Motor neuron (in vitro differentiated cells): ENCODE measurements at regions of chr7 and their contacts with region 1.

Region 1: DNA sequence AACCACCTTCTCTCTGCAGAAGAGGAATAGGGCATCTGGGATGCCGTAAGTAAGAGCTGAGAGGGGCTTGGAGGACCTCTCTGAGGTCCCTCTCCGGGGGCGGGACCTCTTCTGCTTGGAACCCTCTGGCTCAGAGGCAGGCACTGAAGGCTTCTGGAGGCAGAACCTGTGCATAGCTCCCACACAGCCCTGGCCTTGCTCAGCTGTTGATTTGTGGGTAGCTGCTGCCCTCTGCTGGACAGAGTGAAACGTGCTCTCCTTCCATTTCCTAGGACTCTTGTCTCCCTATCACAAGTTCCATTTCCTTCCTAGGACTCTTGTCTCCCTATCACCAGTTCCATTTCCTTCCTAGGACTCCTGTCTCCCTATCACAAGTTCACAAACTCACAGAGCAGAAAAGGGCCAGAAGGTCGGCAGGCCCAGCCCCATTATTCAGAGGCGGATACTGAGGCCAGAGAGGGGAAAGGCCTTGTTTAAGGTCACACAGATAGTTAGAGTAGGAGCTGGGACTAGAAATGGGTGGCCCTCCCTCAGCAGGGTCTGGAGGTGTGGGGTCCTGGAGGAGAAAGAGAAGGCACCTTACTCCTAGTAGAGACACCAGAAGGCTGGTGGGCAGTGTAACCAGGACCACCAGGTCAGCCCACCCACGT is 30.3 kb upstream of the GARS1 start:
- ATAC-seq: peak; percentile 71 to 98 (median 92)
- H3K4me3 ChIP-seq: no peak overlapping the region
- H3K27ac ChIP-seq: no peak overlapping the region
- H3K4me1 ChIP-seq: peaks cover 0 to 3% of the 10 kb centered on the region in 2 donors

Region 2: DNA sequence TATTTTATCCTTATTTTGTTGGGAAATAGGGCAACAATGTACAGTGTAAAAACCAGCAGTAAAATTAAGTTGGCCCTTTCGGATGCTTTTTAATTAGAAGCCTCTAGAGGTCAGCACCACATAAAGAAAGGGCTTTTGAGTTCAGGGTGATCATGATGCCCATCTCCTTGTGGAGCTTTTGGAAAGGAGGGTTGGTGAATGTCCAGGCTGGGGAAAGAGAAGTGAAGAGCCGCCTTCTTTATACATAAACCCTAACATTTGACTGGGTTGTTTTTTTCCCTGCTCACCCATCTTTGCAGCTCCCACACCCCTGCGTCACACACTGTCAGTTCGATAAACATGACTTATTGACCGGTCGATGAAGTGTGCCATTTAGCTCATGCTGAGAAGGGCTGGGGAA is 399.8 kb before region 1 on chr7:
- in situ Hi-C with region 1: loop called in 1 of 9 experiments (anchors 25 kb)
- ATAC-seq: peak in 4 of 8 experiments; percentile 4 to 37 (median 26)
- H3K4me3 ChIP-seq: no peak overlapping the region
- H3K27ac ChIP-seq: no peak overlapping the region
- H3K4me1 ChIP-seq: peaks cover 43 to 55% of the 10 kb centered on the region in 2 donors

Region 3: GRCh38 chr7:30252885-30253795 is 311.2 kb before region 1 on chr7:
- in situ Hi-C with region 1: loop called in 3 of 9 experiments (anchors 25 kb)
- ATAC-seq: peak in 5 of 8 experiments; percentile 35 to 85 (median 63)
- H3K4me3 ChIP-seq: no peak overlapping the region
- H3K27ac ChIP-seq: no peak overlapping the region
- H3K4me1 ChIP-seq: peaks cover 25 to 36% of the 10 kb centered on the region in 2 donors

Region 4: DNA sequence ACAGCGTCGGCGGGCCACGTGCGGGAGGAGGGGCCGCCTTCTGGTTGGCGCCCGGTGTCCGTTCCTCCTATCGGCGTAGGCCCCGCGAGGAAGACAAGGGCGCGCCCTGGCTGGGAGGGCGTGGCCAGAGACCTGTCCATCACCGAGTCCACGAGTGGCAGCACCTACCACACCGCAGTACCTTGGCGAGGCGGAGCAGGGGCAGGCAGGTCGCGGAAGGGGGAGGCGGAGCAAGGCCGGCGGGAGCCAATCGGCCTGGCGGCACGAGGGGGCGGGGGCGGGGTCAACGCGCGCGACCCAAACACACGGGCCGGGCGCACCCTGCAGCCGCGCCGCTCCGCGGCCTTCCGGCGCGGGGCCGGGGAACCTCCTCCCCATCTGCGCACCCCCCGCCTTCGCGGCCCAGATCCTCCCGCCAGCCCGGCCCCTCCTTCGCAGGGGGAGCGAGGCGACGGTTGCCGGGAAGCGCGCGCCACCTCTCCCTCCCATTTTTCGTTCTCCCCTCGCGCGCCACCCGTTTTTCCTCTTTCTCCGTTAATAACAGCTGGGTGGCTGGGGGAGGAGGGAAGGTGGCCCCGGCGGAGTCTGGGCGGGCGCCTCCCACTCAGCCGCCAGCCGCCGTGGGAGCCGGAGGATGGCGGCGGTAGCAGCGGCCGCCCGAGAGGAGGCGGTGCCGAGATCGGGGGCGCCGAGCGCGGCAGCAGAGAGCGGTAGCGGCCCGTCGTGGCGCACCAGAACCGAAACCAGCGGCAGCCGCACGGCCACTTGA is 279.9 kb before region 1 on chr7 and contains the start of gene ZNRF2:
- in situ Hi-C with region 1: loop called in 2 of 9 experiments (anchors 25 kb)
- ATAC-seq: peak; percentile 72 to 93 (median 93)
- H3K4me3 ChIP-seq: peak within 1 kb of the TSS; percentile 51 to 92 (median 61)
- H3K27ac ChIP-seq: peak within 1 kb of the TSS; percentile 60 to 95
- H3K4me1 ChIP-seq: peaks cover 5 to 22% of the 10 kb centered on the region in 2 donors
- total RNA-seq, gene ZNRF2: 4.8 to 18.9 (median 7.3) TPM

Region 5: DNA sequence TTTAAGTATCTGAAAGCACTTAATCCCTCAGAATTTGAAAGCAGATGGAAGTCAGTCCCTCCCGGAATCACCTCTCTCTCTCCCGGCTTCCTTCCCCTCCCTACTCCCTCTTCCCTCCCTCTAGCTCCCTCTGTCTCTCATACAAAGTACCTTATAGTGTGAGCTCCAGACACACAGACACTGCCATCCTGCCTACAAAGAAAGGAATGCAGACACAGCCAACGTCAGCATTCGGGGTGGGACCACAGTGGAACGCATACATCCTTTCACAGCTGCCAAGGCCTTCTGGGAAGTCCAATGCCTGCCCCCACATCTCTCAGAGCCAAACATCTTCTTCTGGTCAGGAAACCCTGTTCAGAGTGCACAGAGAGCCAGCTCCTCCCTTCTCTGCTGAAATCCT is 95.1 kb before region 1 on chr7:
- in situ Hi-C with region 1: no loop called
- ATAC-seq: peak; percentile 59 to 99 (median 80)
- H3K4me3 ChIP-seq: no peak overlapping the region
- H3K27ac ChIP-seq: peak overlapping the region; percentile 37 to 43
- H3K4me1 ChIP-seq: peaks cover 29 to 33% of the 10 kb centered on the region in 2 donors

Region 6: DNA sequence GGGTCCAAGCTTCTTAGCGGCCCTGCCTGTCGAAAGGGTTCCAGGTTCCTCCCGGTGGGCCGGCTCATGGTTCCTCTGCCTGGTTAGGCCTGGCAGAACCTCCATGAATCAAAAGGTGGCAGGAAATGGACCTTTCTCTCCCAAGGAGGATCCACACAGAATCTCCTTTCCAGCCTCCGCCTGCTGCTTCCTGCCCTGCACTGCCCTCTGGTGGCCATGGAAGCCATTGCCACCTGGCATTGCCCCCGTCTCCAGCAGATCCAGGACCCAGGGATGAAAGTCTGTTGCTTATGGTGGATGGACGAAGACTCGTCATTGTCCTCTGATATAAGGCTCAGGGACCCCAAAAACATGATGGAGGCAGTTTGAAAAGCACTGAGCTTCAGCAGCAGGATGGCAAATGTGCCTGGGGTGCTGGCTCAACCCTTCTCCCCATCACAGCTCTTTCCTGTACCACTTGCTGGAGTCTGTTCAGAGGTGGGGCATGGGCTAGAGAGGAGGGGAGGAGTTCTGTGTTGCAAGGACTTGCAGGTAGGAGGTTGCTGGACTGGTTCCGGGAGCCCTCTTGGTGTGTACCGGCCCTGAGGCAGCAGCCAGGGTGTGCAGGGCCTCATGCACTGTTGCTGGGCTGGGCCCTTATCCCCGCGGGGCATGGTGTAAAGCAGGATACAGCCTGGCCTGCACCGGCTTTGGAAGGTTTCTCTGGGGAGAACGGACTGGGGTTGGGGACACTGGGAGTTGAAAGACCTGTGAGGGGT is 176.2 kb after region 1 on chr7:
- in situ Hi-C with region 1: loop called in 1 of 9 experiments (anchors 25 kb)
- ATAC-seq: peak; percentile 84 to 95 (median 92)
- H3K4me3 ChIP-seq: no peak overlapping the region
- H3K27ac ChIP-seq: no peak overlapping the region
- H3K4me1 ChIP-seq: no peaks in the 10 kb centered on the region

Region 7: GRCh38 chr7:30831227-30831626 is 266.9 kb after region 1 on chr7:
- in situ Hi-C with region 1: no loop called
- ATAC-seq: no peak
- H3K4me3 ChIP-seq: no peak overlapping the region
- H3K27ac ChIP-seq: no peak overlapping the region
- H3K4me1 ChIP-seq: no peaks in the 10 kb centered on the region